Dorsolateral prefrontal cortex (tissue), 120 donors: ENCODE measurements at regions of chr14 and their contacts with region 1.

Region 1: DNA sequence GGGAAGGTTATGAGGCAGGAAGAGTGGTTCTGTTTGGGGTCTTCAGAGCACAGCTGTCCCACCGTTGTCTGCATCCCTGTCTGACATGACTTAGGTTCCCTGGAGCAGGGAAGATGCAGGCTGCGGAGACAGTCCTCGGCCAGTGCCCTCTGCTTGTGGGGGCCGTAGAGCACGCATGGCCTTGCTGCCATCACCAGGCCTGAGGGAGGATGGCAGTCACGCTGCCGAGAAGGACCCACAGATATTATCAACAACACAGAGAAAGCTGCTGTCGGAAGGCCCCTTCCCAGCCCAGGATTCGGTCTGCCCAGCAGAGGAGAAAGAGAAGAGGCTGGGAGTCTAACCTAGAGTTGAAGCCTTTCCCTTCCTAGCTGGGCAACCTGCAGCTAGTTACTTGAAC is 35.0 kb downstream of the ERH start:
- DNase-seq: peak in 8 of 10 donors; percentile 33 to 66 (median 44)
- H3K4me3 ChIP-seq: no peak overlapping the region
- H3K27ac ChIP-seq: no peak overlapping the region
- H3K27me3 ChIP-seq: no peaks in the 10 kb centered on the region
- CTCF ChIP-seq: peak in 53 of 56 donors; percentile 23 to 77 (median 57)

Region 2: DNA sequence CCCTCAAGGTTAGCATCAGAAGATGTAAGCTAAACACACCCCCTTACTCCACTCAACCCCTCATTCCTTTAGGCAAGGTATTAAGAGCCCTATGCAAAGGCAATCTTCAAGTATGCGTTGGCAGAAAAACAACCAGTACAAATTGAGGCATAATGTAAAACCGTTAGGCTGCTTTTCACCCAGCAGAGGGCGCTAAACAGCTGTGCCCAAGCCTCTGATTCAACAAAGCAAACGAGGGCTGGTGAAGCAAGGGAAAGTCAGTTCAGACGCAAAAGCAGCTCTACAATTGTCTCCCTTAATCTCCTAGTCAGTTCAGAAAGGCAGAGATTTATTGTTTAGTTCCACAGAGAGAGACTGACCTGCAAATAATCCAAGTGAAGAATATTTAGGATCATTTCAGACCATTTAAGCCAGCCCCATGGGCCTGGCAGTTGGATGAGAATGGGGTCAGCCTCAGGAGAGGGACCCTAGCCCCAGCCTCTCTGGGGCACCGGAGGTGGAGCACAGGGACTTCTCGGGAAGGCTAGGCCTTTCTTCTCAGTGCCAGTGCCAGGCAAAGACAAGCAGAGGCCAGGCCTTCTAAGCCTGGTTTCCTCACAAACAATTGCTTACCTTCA is 233.7 kb before region 1 on chr14:
- intact Hi-C with region 1: loop called in 1 of 2 experiments (anchors 10 kb)
- DNase-seq: peak in 9 of 10 donors; percentile 67 to 81 (median 69)
- H3K4me3 ChIP-seq: peak overlapping the region in 5 of 59 donors; percentile 1 to 19 (median 12)
- H3K27ac ChIP-seq: peak overlapping the region in 28 of 59 donors; percentile 1 to 76 (median 38)
- H3K27me3 ChIP-seq: no peaks in the 10 kb centered on the region
- CTCF ChIP-seq: peak; percentile 71 to 95 (median 90)

Region 3: DNA sequence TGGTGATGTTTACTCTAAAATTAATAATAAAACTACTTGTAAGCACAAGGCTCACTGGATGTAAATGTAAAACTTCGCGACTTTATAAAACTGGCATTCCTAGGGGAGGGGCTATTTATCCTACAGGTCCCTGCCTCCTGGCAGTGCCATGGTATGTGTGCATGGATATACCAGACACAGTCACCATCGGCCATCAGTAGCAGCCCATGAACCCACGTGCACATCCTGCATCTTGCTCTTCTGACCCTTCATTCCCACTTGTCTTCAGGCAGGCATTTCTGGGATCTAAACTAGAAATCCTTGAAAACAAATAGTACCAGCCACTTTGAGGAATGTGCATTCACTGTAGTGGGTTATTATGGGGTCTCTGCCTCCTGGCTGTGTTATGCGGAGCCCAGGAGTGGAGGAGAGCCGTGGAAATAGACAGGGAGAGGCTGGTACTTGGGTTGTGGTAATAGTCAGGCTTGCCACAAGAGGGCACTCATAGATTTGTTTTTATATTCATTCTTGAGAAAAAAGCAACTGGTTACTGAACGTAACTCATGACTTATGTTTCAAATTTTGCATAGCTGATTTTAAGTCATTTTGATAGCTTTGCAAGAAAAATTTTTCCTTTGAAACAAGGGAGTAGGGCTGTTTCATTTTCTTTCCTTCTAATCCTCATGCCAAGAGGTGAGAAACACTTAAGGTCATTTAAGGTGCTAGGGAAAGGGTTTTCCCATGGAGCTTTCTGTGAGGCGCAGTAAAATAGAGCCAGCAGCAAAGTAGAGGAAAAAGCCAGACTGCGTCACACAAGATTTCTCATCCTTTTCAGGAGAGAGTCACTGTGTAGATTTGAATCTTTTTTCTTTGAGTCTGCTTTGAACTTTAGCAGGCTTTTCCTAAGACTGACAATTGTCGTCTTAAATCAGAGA is 120.5 kb before region 1 on chr14:
- intact Hi-C with region 1: loop called (anchors 2 to 5 kb)
- DNase-seq: peak in 3 of 10 donors; percentile 47 to 77 (median 60)
- H3K4me3 ChIP-seq: peak overlapping the region in 1 of 59 donors; percentile 28
- H3K27ac ChIP-seq: peak overlapping the region in 5 of 59 donors; percentile 0 to 24 (median 8)
- H3K27me3 ChIP-seq: no peaks in the 10 kb centered on the region
- CTCF ChIP-seq: peak; percentile 64 to 95 (median 86)

Region 4: GRCh38 chr14:69303086-69303485 is 60.0 kb before region 1 on chr14:
- intact Hi-C with region 1: no loop called
- DNase-seq: no peak
- H3K4me3 ChIP-seq: no peak overlapping the region
- H3K27ac ChIP-seq: peak overlapping the region in 1 of 59 donors; percentile 18
- H3K27me3 ChIP-seq: no peaks in the 10 kb centered on the region
- CTCF ChIP-seq: no peak

Region 5: GRCh38 chr14:69574263-69574953 is 211.4 kb after region 1 on chr14 and contains the start of gene CCDC177:
- intact Hi-C with region 1: no loop called
- DNase-seq: peak in 9 of 10 donors; percentile 45 to 86 (median 69)
- H3K4me3 ChIP-seq: peak within 1 kb of the TSS; percentile 30 to 72 (median 60)
- H3K27ac ChIP-seq: peak within 1 kb of the TSS in 53 of 59 donors; percentile 26 to 92 (median 74)
- H3K27me3 ChIP-seq: peaks cover 0 to 30% (median 2%) of the 10 kb centered on the region in 45 donors
- CTCF ChIP-seq: peak; percentile 64 to 86 (median 78)
- total RNA-seq, gene CCDC177: 2.8 to 14.6 (median 10.0) TPM